GM23248 (cell line): ENCODE measurements at regions of chr7 and their contacts with region 1.

Region 1: DNA sequence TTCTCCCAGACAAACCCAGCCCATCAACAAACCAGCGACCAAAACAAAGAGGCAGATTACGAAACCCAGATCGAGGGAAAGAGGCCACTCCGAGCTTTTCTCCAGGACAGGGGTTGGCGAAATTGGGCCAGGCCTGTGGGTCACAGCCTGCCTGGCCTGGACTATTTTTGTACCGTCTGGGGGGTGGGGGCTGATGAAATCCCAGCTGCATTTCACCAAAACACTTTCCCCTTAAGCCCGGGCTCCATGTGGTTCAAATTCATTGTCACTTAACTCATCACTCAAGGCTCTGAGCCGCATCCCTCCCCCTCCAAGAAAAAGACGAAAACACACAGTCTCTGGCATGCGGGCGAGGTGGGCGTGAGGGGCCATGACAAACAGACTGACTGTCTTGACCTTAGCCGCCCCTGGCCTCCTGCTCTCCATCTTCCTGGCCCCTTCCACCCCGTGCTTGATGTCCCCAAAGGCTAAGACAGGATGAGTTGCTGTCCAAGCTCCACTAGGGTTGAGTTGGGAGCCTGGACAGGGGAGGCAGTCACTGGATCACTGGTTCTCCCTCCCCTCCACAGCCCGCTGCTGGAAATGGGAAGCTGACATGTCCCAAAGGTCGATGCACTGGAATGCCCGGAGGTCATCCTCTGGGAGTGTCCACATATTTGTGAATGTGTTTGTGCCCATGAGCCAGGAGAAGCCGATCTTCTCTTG is 19.2 kb downstream of the TMEM270 start:
- DNase-seq: peak; percentile 72
- H3K4me3 ChIP-seq: 0 out of 2 replicates have a peak overlapping the region, but pooled peaks have one; percentile 2
- H3K27ac ChIP-seq: peak overlapping the region; percentile 65
- H3K4me1 ChIP-seq: peaks cover 23% of the 10 kb centered on the region
- H3K27me3 ChIP-seq: no peaks in the 10 kb centered on the region

Region 2: GRCh38 chr7:74026903-74027551 is 146.9 kb after region 1 on chr7:
- in situ Hi-C with region 1: loop called (anchors 10 kb)
- DNase-seq: peak; percentile 76
- H3K4me3 ChIP-seq: no peak overlapping the region
- H3K27ac ChIP-seq: no peak overlapping the region
- H3K4me1 ChIP-seq: peaks cover 51% of the 10 kb centered on the region
- H3K27me3 ChIP-seq: no peaks in the 10 kb centered on the region

Region 3: DNA sequence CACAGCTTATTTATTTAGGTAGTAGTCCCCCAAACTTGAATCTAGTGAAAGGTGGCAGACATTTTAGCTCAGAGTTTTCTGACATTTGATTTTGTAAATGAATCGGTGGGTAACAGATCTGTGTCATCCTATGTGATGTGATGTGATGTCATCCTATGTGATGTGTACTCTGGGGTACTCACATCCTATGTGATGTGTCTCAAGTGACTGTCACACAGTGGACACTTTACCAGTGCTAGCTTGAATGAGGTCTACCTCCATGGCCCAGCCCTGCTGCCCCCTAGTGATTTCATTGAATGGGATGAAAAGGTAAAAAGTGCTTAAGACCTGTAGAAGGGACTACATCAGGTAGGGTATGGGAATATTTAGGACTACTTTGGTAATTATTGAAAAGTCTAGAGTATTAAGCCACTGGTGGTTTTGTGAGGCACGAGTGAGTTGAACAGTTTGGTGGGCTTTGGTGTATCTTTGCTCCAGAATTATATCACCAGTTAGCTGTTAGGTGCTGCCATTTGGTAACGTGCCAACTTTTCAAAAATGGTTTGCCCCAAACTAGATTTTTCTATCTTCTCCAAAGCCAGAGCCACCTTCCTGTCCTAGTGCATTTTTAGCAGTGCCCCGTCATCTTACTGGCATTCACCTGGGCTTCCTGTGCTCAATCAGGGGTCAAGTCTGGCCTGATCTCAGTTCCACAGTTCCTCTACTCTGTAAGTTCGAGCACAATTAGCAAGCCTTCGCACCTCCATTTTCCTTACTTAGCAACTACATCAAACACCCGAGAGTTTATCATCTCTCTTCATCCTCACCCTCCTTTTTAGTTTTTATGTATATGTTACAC is 303.7 kb after region 1 on chr7:
- in situ Hi-C with region 1: loop called (anchors 5 kb)
- DNase-seq: peak; percentile 33
- H3K4me3 ChIP-seq: no peak overlapping the region
- H3K27ac ChIP-seq: peak overlapping the region; percentile 34; the same call in 1 of the 2 replicates
- H3K4me1 ChIP-seq: peaks cover 71% of the 10 kb centered on the region
- H3K27me3 ChIP-seq: no peaks in the 10 kb centered on the region